Natural killer cell (primary cell): ENCODE measurements at regions of chr20 and their contacts with region 1.

Region 1: GRCh38 chr20:8019246-8019997 is at the start of gene TMX4:
- DNase-seq: peak; percentile 92 to 93
- ATAC-seq: peak; percentile 83 to 95 (median 88)
- H3K4me3 ChIP-seq: peak within 1 kb of the TSS; percentile 79
- H3K4me3 Mint-ChIP-seq: peak within 1 kb of the TSS; percentile 94
- H3K27ac ChIP-seq: peak within 1 kb of the TSS; percentile 91
- H3K27ac Mint-ChIP-seq: peak within 1 kb of the TSS in 1 of 2 donors; percentile 90
- H3K4me1 ChIP-seq: peaks cover 8% of the 10 kb centered on the region
- H3K4me1 Mint-ChIP-seq: peaks cover 37 to 44% of the 10 kb centered on the region in 2 donors
- H3K27me3 ChIP-seq: no peaks in the 10 kb centered on the region
- H3K27me3 Mint-ChIP-seq: peaks cover 0 to 2% of the 10 kb centered on the region in 2 donors
- CTCF ChIP-seq: no peak
- total RNA-seq, gene TMX4: 94.4 to 97.9 (median 94.5) TPM

Region 2: GRCh38 chr20:7893014-7893707 is 126.3 kb before region 1 on chr20:
- intact Hi-C with region 1: no loop called
- DNase-seq: no peak
- ATAC-seq: no peak
- H3K4me3 ChIP-seq: no peak overlapping the region
- H3K4me3 Mint-ChIP-seq: no peak overlapping the region
- H3K27ac ChIP-seq: no peak overlapping the region
- H3K27ac Mint-ChIP-seq: no peak overlapping the region
- H3K4me1 ChIP-seq: no peaks in the 10 kb centered on the region
- H3K4me1 Mint-ChIP-seq: no peaks in the 10 kb centered on the region
- H3K27me3 ChIP-seq: no peaks in the 10 kb centered on the region
- H3K27me3 Mint-ChIP-seq: peaks cover 2 to 24% of the 10 kb centered on the region in 2 donors
- CTCF ChIP-seq: no peak

Region 3: DNA sequence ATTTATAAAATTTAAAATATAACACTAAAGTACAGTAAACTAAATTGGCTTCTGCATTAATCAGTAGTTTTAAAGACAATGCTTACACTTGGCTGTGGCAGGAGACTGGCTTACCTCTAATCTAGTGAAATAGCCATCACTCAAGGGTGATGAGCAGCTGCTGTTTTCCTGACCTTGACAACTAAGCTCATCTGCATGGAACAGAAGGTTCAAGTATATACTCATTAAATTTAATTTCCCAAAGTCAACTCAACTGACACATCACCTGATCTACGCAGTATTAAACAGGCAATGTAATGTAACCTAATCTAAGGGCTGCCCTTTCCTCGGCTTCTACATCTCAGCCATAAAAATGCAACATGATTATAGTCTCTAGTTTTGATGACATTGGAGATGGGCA is 14.4 kb before region 1 on chr20:
- intact Hi-C with region 1: no loop called
- DNase-seq: no peak
- ATAC-seq: no peak
- H3K4me3 ChIP-seq: no peak overlapping the region
- H3K4me3 Mint-ChIP-seq: no peak overlapping the region
- H3K27ac ChIP-seq: no peak overlapping the region
- H3K27ac Mint-ChIP-seq: no peak overlapping the region
- H3K4me1 ChIP-seq: no peaks in the 10 kb centered on the region
- H3K4me1 Mint-ChIP-seq: peaks cover 32 to 39% of the 10 kb centered on the region in 2 donors
- H3K27me3 ChIP-seq: no peaks in the 10 kb centered on the region
- H3K27me3 Mint-ChIP-seq: no peaks in the 10 kb centered on the region
- CTCF ChIP-seq: no peak

Region 4: GRCh38 chr20:8291873-8292272 is 272.5 kb after region 1 on chr20:
- intact Hi-C with region 1: loop called (anchors 1 kb)
- DNase-seq: no peak
- ATAC-seq: no peak
- H3K4me3 ChIP-seq: no peak overlapping the region
- H3K4me3 Mint-ChIP-seq: no peak overlapping the region
- H3K27ac ChIP-seq: no peak overlapping the region
- H3K27ac Mint-ChIP-seq: no peak overlapping the region
- H3K4me1 ChIP-seq: no peaks in the 10 kb centered on the region
- H3K4me1 Mint-ChIP-seq: peaks cover 19 to 34% of the 10 kb centered on the region in 2 donors
- H3K27me3 ChIP-seq: no peaks in the 10 kb centered on the region
- H3K27me3 Mint-ChIP-seq: peaks cover 8 to 9% of the 10 kb centered on the region in 2 donors
- CTCF ChIP-seq: no peak

Region 5: DNA sequence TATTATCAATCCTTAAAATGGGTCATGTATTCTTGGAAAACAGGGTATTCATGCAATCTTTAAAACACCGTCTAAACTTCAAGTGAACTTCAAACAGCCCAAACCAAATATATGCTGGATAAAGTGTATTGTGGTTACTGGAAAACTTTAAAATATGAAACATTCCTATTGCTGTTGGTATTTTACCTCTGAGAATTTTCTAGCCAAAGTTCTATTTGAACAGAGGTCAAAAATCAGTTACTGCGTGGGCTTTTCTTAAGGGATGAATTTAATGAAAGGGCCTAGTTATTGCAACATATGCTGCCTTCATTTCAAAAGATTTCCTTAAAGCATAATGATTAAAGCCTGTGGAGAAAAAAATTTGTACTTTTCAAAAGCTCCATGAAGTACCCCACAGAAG is 548.7 kb after region 1 on chr20:
- intact Hi-C with region 1: no loop called
- DNase-seq: no peak
- ATAC-seq: no peak
- H3K4me3 ChIP-seq: no peak overlapping the region
- H3K4me3 Mint-ChIP-seq: no peak overlapping the region
- H3K27ac ChIP-seq: no peak overlapping the region
- H3K27ac Mint-ChIP-seq: no peak overlapping the region
- H3K4me1 ChIP-seq: no peaks in the 10 kb centered on the region
- H3K4me1 Mint-ChIP-seq: peaks cover 9 to 10% of the 10 kb centered on the region in 2 donors
- H3K27me3 ChIP-seq: no peaks in the 10 kb centered on the region
- H3K27me3 Mint-ChIP-seq: no peaks in the 10 kb centered on the region
- CTCF ChIP-seq: no peak